Left cardiac atrium (tissue), 4 donors: ENCODE measurements at regions of chr12 and their contacts with region 1.

Region 1: GRCh38 chr12:105382771-105383622 is 52.5 kb downstream of the C12orf75 start:
- DNase-seq: peak; percentile 25
- ATAC-seq: peak; percentile 81 to 86

Region 2: DNA sequence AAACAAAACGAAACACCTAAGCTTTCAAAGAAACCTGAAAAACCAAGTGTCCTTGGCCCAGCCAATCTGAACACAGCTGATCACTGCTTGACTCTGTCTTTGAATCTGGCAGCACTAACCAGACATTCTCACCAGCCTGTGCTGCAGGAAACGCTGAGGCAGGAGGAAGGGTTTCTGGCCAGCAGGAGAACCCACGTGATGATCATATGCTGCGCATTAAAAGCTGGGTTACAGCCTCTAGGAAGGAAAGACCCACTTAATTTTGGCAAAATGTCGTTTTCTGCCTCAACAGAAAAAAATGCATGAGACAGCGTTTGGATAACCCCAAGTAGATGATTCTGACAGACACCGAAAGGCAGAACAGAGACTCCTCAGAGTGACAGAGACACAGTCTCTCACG is 156.8 kb before region 1 on chr12:
- intact Hi-C with region 1: loop called in 1 of 2 experiments (anchors 10 kb)
- DNase-seq: peak; percentile 73
- ATAC-seq: peak; percentile 92 to 96

Region 3: DNA sequence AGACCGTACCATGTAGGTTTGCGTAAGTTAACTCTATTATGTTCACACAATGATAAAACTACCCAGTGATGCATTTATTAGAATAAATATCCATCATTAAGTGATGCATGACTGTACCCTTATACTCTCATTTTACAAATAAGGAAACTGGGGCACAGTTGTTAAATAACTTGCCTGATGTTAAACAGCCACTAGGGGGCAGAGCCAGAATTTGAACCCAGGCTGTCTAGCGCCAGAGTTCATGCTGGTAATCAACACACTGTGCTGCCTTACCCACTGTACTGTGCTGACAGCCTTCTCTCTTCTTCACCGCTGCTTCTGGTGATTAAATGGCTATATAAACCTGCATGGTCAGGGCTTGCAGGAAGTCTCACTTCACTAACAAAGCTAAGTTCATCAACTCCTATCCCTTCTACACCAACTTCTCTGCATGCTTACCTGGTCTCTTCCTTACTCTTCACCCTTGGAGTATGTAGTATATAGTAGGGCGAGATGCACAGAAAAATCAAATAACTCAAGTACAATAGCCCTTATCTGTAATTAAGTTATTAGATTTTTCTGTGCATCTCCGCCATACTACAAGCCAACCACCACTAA is 103.4 kb before region 1 on chr12:
- intact Hi-C with region 1: loop called in 1 of 2 experiments (anchors 5 kb)
- DNase-seq: peak; percentile 33
- ATAC-seq: peak; percentile 55 to 74

Region 4: DNA sequence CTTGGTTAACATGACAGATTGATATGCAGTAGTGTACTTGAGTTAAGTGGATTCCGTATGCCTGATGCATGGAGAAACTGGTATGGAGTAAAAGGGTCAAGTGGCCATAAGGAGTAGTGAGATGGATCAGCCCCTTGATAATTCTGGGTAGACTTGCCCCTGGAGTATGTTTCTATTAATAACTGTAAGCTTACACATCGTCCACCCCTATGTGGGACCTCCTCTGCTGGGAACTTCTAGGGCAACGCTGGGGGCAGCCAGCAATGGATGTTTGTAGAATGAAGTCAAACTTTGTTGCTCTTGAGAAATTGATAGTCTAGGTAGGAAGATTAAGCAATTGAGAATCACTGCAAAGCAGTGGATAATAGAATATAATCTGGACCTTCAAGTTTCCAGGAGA is 49.0 kb before region 1 on chr12:
- intact Hi-C with region 1: no loop called
- DNase-seq: no peak
- ATAC-seq: no peak